Endothelial cell of umbilical vein (primary cell): ENCODE measurements at regions of chr2 and their contacts with region 1.

Region 1: GRCh38 chr2:158745044-158745865 is 49.9 kb upstream of the DAPL1 start:
- DNase-seq: peak; percentile 80
- H3K4me3 ChIP-seq: no peak overlapping the region
- H3K27ac ChIP-seq: no peak overlapping the region
- H3K4me1 ChIP-seq: peaks cover 3% of the 10 kb centered on the region
- H3K27me3 ChIP-seq: peaks cover 23 to 28% of the 10 kb centered on the region in 2 experiments
- CTCF ChIP-seq: peak; percentile 46 to 53
- POLR2A ChIP-seq: no peak

Region 2: DNA sequence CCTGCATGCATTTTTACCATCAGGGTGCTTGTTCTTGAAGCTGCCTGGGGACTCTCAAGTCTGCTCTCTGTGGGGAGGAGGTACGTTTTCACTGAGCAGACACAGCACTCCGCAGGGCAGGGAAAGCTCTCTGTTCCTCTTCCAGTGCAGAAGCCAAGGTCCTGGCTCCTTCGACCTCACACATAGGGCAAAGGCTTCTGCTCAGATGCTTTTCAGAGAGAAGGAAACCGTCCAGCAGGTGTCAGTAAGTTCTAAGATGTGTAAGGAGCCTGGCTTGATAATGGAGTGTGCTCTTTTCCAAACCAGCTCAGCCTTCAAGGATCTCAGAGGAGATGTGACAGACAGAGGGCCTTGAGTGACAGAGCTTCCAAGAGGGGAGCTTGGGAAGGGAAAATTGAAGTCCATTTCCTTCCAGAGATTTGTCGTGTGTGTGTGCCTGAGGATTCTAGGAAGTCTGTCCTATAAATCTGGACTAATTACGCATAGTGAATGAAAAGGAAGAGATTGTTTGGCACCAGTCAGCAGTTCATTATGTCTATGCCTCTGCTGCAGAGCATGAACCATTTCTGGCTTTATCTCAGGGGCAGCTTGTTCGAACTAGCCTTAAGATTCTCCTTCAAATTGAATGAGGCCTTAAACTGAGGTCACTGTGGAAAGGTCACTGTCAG is 710.9 kb before region 1 on chr2:
- CTCF ChIA-PET with region 1: interaction called, 105 read pairs
- POLR2A ChIA-PET with region 1: no interaction called
- dilution Hi-C with region 1: no loop called
- intact Hi-C with region 1: loop called (anchors 1 kb)
- DNase-seq: peak; percentile 51
- H3K4me3 ChIP-seq: no peak overlapping the region
- H3K27ac ChIP-seq: no peak overlapping the region
- H3K4me1 ChIP-seq: no peaks in the 10 kb centered on the region
- H3K27me3 ChIP-seq: peaks cover 13 to 23% of the 10 kb centered on the region in 2 experiments
- CTCF ChIP-seq: peak; percentile 34 to 45
- POLR2A ChIP-seq: no peak

Region 3: DNA sequence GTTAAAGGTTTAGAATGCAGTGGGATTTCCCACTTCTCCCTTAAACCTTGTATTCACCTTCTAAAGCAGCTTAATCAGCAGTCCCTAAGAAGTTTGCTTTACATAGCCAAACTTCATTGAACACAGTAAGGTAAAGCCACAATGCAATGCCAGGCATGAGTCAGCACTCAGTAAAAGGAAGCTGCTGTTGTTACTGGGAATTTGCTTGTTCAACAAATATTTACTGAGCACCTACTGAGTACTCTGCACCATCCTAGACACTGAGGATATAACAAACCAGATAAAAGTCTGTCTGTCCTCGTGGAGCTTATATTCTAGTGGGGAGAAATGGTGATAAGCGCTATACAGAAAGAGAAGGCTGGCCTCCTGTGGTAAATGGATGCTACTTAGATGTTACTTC is 125.8 kb before region 1 on chr2:
- CTCF ChIA-PET with region 1: interaction called, 12 read pairs
- POLR2A ChIA-PET with region 1: no interaction called
- dilution Hi-C with region 1: no loop called
- intact Hi-C with region 1: no loop called
- DNase-seq: peak; percentile 61
- H3K4me3 ChIP-seq: no peak overlapping the region
- H3K27ac ChIP-seq: peak overlapping the region; percentile 19
- H3K4me1 ChIP-seq: peaks cover 7% of the 10 kb centered on the region
- H3K27me3 ChIP-seq: no peaks in the 10 kb centered on the region
- CTCF ChIP-seq: no peak
- POLR2A ChIP-seq: no peak

Region 4: GRCh38 chr2:158716121-158716771 is 29.0 kb before region 1 on chr2:
- CTCF ChIA-PET with region 1: interaction called, 25 read pairs
- POLR2A ChIA-PET with region 1: no interaction called
- dilution Hi-C with region 1: no loop called
- intact Hi-C with region 1: loop called (anchors 2 kb)
- DNase-seq: peak; percentile 98
- H3K4me3 ChIP-seq: no peak overlapping the region
- H3K27ac ChIP-seq: peak overlapping the region; percentile 76
- H3K4me1 ChIP-seq: peaks cover 38% of the 10 kb centered on the region
- H3K27me3 ChIP-seq: no peaks in the 10 kb centered on the region
- CTCF ChIP-seq: no peak
- POLR2A ChIP-seq: no peak

Region 5: GRCh38 chr2:159009940-159010339 is 264.7 kb after region 1 on chr2:
- CTCF ChIA-PET with region 1: no interaction called
- POLR2A ChIA-PET with region 1: no interaction called
- dilution Hi-C with region 1: no loop called
- intact Hi-C with region 1: no loop called
- DNase-seq: no peak
- H3K4me3 ChIP-seq: no peak overlapping the region
- H3K27ac ChIP-seq: no peak overlapping the region
- H3K4me1 ChIP-seq: peaks cover 9% of the 10 kb centered on the region
- H3K27me3 ChIP-seq: no peaks in the 10 kb centered on the region
- CTCF ChIP-seq: no peak
- POLR2A ChIP-seq: no peak